Posterior cingulate gyrus (tissue), 11 donors: ENCODE measurements at regions of chr9 and their contacts with region 1.

Region 1: GRCh38 chr9:111483862-111484571 is at the start of gene ECPAS:
- DNase-seq: peak; percentile 48 to 95 (median 62)

Region 2: DNA sequence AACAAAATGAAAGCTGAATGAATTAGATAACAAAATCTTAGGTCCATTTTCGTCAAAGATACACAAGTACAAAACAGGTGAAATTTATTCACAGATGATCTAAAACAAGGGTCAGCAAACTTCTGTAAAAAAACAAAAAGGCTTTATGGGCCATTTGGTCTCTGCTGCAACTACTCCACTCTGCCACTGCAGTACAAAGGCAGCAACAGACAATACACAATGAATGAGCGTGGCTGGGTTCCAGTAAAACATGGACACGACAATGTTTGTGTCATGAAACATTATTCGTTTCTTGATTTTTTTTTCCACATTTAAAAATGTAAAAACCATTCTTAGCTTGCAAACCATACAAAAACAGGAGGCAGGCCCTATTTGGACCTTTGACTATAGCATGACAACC is 71.7 kb before region 1 on chr9:
- intact Hi-C with region 1: loop called (anchors 5 kb)
- DNase-seq: peak in 6 of 10 donors; percentile 35 to 89 (median 58)

Region 3: DNA sequence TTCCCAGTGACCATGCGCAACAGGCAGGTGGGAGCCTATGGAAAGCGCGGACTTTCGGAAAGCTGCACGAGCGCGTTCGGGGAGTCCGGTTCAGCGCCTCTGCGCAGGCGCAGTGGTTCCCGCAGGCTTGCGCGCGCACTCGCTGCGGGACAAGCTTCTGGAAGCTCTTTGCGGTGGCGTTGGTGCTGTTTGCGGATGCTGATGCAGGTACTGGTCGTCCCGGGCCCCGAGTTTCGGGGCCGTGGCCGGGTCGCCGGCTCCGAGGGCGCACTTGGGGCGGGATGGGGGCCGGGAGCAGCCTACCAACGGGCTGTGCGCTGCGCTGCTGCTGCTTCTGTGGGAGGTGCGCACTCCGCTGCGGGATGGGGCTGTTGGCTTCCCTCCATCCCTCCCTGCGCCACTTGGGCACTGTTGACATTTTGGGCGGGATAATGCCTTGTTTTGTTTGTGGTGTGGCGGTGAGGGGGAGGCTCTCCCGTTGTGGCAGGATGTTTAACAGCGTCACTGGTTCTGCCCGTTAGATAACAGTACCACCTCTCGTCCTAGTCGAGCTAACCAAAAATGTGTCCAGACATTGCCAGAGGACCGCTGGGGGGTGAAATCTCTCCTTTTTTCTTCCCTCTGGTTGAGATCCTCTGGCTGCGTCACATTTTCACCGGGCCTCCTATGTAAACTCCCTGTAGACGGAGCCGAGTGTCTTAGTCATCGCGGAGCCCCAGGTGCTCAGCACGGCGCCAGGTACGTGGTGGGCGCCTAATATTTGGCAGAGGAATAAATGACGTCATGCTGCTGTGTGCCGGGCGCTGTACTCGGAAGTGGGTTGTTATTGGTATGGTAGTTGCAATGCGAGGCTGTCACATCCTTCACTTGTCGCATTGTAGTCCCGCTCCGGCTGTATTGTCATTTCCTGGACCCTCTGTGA is 41.3 kb after region 1 on chr9 and contains the start of gene ZNF483:
- intact Hi-C with region 1: loop called (anchors 1 kb)
- DNase-seq: peak; percentile 82 to 98 (median 89)